ENCODE measurements at regions of chr19 and their contacts with region 1.

Region 1: DNA sequence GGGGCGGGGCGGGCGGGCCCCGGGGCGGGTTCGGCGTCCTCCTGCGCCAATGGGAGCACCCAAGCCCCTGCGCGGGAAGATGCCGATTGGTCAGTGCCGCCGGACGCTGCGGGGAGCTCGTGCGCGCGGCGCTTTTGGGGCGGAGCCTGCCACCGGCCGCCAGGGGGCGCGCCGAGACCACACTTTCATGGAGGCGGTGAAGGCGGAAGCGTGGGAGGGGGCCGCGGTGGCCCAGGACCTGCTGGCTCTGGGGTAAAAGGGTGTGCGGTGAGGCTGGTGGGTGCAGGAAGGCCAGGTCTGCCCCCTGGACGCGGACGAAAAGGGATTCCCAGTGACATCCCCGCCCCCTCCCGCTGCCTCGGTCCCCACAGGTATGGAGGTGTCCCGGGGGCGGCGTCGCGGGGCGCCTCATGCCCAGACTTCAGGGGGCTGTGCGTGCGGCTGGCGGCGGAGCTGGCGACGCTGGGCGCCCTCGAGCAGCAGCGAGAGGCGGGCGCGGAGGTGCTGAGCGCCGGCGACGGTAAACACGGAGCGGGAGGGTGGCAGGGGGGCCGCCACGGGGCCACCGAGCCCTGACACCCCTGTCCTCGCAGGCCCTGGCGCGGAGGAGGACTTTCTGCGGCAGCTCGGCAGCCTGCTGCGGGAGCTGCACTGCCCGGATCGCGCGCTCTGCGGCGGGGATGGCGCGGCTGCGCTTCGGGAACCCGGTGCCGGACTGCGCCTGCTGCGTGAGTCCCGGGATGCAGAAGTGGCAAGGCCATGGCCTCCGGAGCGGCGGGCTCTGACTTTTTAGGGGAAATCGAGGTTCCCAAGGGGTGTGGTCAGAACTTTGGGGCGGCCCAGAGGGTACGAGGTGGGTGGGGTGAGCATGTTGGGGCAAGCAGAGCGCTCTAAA is at the start of gene FAM98C:
- DNase-seq: peak; percentile 97
- ATAC-seq: peak; percentile 94
- H3K4me3 Mint-ChIP-seq: peak within 1 kb of the TSS; percentile 77
- H3K27ac Mint-ChIP-seq: no peak within 1 kb of the TSS
- H3K4me1 Mint-ChIP-seq: no peaks in the 10 kb centered on the region
- H3K27me3 Mint-ChIP-seq: peaks cover 57% of the 10 kb centered on the region
- CTCF ChIP-seq: peak; percentile 98
- total RNA-seq, gene FAM98C: 9.7 to 12.2 TPM (median 10.2 TPM) in 3 replicates

Region 2: GRCh38 chr19:38361633-38362075 is 41.6 kb before region 1 on chr19:
- CTCF ChIA-PET with region 1: interaction called, 12 read pairs
- POLR2A ChIA-PET with region 1: no interaction called
- DNase-seq: peak; percentile 94
- ATAC-seq: peak; percentile 79
- H3K4me3 Mint-ChIP-seq: peak overlapping the region; percentile 86
- H3K27ac Mint-ChIP-seq: peak overlapping the region; percentile 93
- H3K4me1 Mint-ChIP-seq: peaks cover 10% of the 10 kb centered on the region
- H3K27me3 Mint-ChIP-seq: peaks cover 66% of the 10 kb centered on the region
- CTCF ChIP-seq: no peak

Region 3: DNA sequence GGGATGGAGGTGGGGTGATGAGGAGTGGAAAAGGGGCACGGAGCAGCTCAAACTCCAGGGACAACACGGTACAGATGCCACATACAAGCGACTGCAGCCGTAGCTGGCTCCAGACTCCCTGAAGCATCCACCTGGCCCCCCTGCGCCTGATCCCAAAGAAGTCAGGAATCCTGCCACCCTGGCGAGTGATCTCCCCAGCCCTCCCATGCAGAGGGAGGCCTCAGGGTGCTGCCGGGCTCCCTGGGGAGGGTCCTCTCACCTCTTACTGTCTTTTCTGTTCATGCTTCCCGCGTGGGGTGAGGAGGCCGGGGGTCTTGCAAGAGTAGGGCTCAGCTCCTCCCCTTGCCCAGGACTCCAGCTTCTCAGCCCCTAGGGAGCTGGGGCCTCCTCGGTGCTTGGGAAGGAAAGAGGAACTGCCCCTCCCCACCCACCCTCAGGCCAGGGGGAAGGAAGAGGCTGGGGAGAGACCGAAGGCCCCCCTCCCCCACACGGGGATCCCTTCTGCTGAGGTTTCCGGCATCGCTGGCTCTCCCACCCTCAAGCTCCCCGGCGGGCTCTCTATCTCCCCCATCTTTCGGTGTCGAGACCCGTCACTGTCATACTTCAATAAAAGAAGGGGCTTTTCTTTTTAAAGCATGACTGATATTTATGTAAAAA is 22.7 kb after region 1 on chr19 and contains the start of gene RASGRP4:
- CTCF ChIA-PET with region 1: interaction called, 55 read pairs
- POLR2A ChIA-PET with region 1: interaction called, 5 read pairs
- DNase-seq: peak; percentile 45
- ATAC-seq: peak; percentile 79
- H3K4me3 Mint-ChIP-seq: peak within 1 kb of the TSS; percentile 45
- H3K27ac Mint-ChIP-seq: 0 out of 2 replicates have a peak within 1 kb of the TSS, but pooled peaks have one; percentile 53
- H3K4me1 Mint-ChIP-seq: peaks cover 25% of the 10 kb centered on the region
- H3K27me3 Mint-ChIP-seq: no peaks in the 10 kb centered on the region
- CTCF ChIP-seq: no peak
- total RNA-seq, gene RASGRP4: 2.5 to 4.1 TPM (median 3.4 TPM) in 3 replicates

Region 4: DNA sequence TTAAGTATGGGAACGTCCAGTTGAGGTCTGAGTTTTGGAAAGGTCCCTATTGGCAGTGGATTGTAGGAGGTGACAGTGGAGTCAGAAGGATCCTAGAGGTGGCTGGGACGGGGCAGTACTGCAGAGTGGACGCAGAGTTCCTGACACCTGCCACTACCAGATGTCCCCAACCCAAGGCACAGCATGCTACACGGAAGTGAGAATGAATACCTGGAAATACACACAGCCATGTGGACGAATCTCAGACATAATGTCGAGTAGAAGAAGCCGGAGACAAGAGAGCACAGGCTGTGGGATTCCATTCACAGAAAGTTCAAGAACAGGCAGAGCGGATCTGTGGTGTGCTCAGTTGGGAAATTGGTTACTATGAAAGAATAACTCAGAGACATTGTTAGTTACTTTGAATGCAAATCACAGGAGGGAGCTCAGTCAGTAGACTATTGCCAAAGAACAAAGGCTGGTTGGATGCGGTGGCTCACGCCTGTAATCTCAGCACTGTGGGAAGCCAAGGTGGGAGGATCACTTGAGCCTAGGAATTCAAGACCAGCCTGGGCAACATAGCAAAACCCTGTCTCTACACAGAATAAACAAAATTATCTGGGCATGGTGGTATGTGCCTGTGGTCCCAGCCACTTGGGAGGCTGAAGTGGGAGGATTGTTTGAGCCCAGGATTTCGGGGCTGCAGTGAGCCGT is 67.7 kb after region 1 on chr19:
- CTCF ChIA-PET with region 1: interaction called, 10 read pairs
- POLR2A ChIA-PET with region 1: no interaction called
- DNase-seq: no peak
- ATAC-seq: no peak; the same call in 1 of the 2 replicates
- H3K4me3 Mint-ChIP-seq: no peak overlapping the region
- H3K27ac Mint-ChIP-seq: peak overlapping the region; percentile 86
- H3K4me1 Mint-ChIP-seq: peaks cover 4% of the 10 kb centered on the region; the same call in 1 of the 2 replicates
- H3K27me3 Mint-ChIP-seq: no peaks in the 10 kb centered on the region
- CTCF ChIP-seq: no peak

Region 5: GRCh38 chr19:38514812-38515633 is 111.8 kb after region 1 on chr19:
- CTCF ChIA-PET with region 1: interaction called, 15 read pairs
- POLR2A ChIA-PET with region 1: no interaction called
- DNase-seq: peak; percentile 84
- ATAC-seq: peak; percentile 93
- H3K4me3 Mint-ChIP-seq: no peak overlapping the region
- H3K27ac Mint-ChIP-seq: no peak overlapping the region
- H3K4me1 Mint-ChIP-seq: no peaks in the 10 kb centered on the region
- H3K27me3 Mint-ChIP-seq: no peaks in the 10 kb centered on the region
- CTCF ChIP-seq: peak; percentile 81

Region 6: GRCh38 chr19:38634757-38635482 is 231.7 kb after region 1 on chr19:
- CTCF ChIA-PET with region 1: interaction called, 74 read pairs
- POLR2A ChIA-PET with region 1: interaction called, 3 read pairs
- DNase-seq: peak; percentile 84
- ATAC-seq: peak; percentile 23; the same call in 1 of the 2 replicates
- H3K4me3 Mint-ChIP-seq: no peak overlapping the region
- H3K27ac Mint-ChIP-seq: peak overlapping the region; percentile 91
- H3K4me1 Mint-ChIP-seq: peaks cover 34% of the 10 kb centered on the region
- H3K27me3 Mint-ChIP-seq: no peaks in the 10 kb centered on the region
- CTCF ChIP-seq: peak; percentile 97

Region 7: GRCh38 chr19:38929929-38930775 is 526.9 kb after region 1 on chr19 and contains the start of gene SARS2:
- CTCF ChIA-PET with region 1: interaction called, 16 read pairs
- POLR2A ChIA-PET with region 1: no interaction called
- DNase-seq: peak; percentile 94
- ATAC-seq: peak; percentile 55
- H3K4me3 Mint-ChIP-seq: peak within 1 kb of the TSS; percentile 82
- H3K27ac Mint-ChIP-seq: peak within 1 kb of the TSS; percentile 98
- H3K4me1 Mint-ChIP-seq: peaks cover 10% of the 10 kb centered on the region
- H3K27me3 Mint-ChIP-seq: peaks cover 4% of the 10 kb centered on the region; the same call in 1 of the 2 replicates
- CTCF ChIP-seq: peak; percentile 86; the same call in 1 of the 2 replicates
- total RNA-seq, gene SARS2: 66.4 to 74.7 TPM (median 69.6 TPM) in 3 replicates